GM10248 (cell line): ENCODE measurements at regions of chr1 and their contacts with region 1.

Region 1: DNA sequence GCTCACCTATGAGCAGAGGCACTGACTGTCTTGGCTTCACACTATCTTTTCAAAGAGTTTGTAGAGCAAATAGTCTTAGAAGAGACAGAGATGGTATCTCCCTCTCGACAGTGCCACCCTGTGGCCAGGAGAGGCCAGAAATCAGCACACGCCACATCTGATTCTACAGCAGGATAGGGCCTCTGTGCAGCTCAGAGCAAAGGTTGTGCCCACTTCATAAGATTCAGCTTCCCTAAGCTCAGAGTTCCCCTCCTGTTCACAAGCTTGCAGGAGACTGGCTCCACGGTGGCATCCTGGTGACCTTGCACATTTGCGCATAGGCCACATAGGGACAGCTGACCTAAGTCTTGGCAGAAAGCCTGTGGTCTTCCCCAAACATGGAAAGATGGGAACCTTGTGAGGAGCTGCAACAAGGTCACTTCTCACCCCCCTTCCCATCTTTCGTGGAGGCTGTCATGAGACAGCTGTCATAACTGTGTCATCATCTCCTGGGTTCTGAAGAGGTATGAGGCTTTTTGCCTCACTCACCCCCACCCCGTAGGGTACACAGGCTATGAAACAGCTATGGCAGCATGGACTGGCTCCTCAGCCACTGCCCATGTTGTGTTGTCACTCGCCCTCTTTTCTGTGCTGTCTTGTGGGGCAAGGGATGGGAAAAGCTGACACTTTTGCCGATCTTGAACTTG is 3.0 kb downstream of the ITLN2 start:
- DNase-seq: peak; percentile 80
- CTCF ChIP-seq: peak; percentile 87

Region 2: GRCh38 chr1:160675641-160676410 is 275.8 kb before region 1 on chr1:
- CTCF ChIA-PET with region 1: interaction called, 64 read pairs
- POLR2A ChIA-PET with region 1: no interaction called
- DNase-seq: peak; percentile 67
- CTCF ChIP-seq: peak; percentile 90

Region 3: DNA sequence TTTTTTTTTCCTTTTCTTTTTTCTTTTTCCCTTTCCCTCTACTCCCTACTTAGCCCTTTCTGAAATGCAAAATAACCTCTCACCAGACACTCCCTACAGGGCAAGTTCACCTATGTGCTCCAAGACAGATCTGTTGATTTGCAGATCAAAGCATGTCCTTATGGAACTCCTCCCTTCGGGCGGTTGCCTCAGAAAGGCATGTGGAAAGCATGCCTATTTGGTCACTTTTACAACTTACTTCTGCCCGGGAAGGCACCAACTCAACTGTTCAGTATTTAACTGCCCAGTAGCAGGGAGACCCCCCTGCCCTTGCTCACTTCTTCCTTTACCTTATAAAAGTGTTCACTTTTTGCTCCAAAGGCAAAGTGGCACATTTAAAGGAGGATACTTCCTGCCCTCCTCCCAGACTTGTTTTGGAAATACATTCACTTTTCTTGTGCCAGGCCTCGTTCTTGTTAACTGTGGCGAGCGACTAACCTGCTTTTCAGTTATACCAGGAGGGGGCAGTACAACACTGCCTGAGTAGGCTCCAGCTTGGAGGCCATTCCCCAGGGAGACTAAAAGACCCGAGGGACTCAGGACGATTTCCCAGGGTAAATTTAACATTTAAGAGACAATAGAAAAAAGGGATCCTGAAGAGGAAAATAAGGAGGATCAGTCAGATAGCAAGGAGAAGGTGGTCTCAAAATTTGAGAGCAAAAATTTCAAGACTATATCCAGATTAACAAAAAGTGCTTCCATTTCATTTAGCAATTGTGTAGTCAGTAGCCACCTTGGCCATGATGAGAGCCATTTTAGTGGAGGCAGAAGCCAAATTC is 224.9 kb before region 1 on chr1:
- CTCF ChIA-PET with region 1: interaction called, 80 read pairs
- POLR2A ChIA-PET with region 1: no interaction called
- DNase-seq: peak; percentile 62
- CTCF ChIP-seq: peak; percentile 80

Region 4: GRCh38 chr1:160830321-160831153 is 121.0 kb before region 1 on chr1:
- CTCF ChIA-PET with region 1: interaction called, 227 read pairs
- POLR2A ChIA-PET with region 1: no interaction called
- DNase-seq: peak; percentile 65
- CTCF ChIP-seq: peak; percentile 72

Region 5: DNA sequence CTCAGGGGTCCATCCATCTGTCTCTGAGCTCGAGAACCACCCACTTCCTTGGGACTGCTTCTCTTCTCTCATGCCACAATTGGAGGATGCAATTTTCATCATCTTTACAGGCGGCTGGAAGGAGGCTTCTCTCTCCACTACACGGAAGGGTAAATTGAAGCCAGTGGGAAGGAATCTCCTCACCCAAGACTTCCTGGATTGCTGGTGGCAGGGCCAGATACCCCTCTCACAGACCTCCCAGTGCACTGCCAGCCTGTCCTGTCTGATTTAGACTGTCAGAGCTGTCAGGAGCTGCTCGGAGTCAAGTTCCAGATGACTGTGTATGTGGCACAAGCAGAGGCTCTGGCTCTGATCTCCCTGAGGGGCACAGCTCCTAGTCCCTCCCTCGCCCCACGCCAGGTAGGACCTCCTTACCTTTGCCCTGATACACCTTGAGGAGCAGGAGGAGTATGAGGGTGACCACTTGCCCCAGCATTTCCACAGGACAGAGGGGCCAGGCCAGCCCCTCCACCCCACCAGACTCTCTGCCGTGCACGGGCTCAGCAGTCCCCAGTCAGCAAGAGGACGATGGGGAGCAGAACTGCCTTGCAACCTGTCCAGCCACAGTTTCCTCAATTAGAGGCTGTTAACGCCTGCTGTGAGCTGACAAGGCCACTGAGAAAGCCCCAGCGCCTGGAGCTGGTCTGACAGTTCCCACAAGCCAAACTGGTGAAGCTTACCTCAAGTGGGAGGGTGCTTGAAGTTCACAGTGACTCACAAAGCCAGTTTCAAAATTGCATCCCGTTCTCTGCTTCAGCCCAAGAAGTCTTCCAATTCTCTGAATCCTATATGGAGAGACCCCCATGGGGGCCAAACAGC is 89.2 kb before region 1 on chr1 and contains the start of gene CD244:
- CTCF ChIA-PET with region 1: interaction called, 19 read pairs
- POLR2A ChIA-PET with region 1: no interaction called
- DNase-seq: peak; percentile 81
- CTCF ChIP-seq: no peak

Region 6: GRCh38 chr1:160963521-160963920 is 11.9 kb after region 1 on chr1:
- CTCF ChIA-PET with region 1: interaction called, 31 read pairs
- POLR2A ChIA-PET with region 1: no interaction called
- DNase-seq: no peak
- CTCF ChIP-seq: no peak

Region 7: GRCh38 chr1:160997323-160998038 is 45.9 kb after region 1 on chr1:
- CTCF ChIA-PET with region 1: interaction called, 11 read pairs
- POLR2A ChIA-PET with region 1: no interaction called
- DNase-seq: peak; percentile 66
- CTCF ChIP-seq: peak; percentile 81

Region 8: DNA sequence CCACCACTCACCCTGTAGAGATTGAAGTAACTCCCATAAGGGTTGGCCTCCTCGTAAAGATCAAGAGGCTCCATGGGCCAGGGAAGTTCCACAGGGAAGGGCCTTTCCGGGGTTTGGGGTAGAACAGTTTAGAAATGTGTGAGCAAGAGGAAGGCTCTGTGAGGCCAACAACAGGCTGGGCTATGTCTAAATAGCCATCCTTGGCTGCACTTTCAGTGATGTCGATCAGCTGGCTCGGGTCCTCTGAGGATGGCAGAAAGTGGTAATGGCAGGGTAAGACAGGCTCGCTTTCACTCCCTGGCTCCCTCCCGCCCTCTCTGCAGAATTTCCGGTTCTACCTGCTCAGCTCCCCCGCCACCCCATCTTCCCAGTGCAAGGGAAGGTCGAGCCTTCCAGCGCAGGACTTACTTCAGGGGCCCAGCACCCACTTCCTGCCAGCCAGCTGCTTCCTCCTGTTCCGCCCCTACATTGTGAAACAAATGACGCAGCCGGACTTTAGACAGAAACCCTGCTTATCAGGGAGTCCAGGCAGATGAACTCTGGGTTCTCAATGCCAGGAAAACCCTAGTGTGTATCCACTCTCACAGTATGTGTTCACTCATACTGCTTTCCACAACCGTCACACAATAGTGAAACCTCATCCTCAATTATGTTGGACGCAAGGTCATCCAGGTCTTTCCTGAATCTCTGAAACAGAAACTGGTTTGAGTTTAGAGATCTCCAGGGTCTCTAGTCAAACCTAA is 62.1 kb after region 1 on chr1:
- CTCF ChIA-PET with region 1: no interaction called
- POLR2A ChIA-PET with region 1: no interaction called
- DNase-seq: peak; percentile 84
- CTCF ChIP-seq: no peak

Region 9: GRCh38 chr1:162062542-162063015 is 1111.0 kb after region 1 on chr1:
- CTCF ChIA-PET with region 1: no interaction called
- POLR2A ChIA-PET with region 1: no interaction called
- DNase-seq: no peak
- CTCF ChIP-seq: no peak